PC-9 (cell line): ENCODE measurements at regions of chr22 and their contacts with region 1.

Region 1: DNA sequence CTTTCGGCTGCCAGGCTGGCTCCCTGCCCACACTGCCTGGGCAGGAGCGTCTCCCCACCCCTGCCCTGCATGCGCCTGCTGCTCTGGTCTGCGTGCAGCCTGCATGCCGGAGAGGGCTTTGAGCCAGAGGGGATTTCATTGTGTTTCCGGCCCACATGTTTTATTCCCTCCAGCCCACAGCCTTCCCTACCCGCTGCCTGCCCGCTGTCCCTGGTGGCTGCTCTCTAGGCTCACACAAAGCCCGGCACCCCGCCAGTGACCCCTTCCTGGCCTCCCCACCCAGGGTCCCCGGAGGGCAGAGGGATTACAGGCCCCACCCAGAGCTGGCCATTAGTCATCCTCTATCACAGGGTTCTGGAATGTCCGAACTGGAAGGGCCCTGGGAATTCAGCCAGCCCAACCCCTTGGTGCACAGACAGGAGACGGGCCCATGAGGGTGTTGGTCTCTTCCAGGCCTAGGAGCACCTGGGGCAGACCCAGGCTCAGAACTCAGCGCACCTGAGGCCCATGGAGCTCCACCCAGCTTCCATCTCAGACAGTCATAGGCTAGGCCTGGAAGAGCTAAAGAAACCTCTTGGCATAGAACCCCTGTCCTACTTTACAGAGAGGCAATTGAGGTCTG is 55.2 kb upstream of the GCAT start:
- DNase-seq: peak; percentile 100
- H3K4me3 ChIP-seq: no peak overlapping the region
- H3K27ac ChIP-seq: peak overlapping the region; percentile 95
- H3K4me1 ChIP-seq: peaks cover 74% of the 10 kb centered on the region
- H3K27me3 ChIP-seq: no peaks in the 10 kb centered on the region
- CTCF ChIP-seq: no peak; the same call in 1 of the 2 replicates

Region 2: GRCh38 chr22:37676736-37677492 is 75.7 kb before region 1 on chr22:
- CTCF ChIA-PET with region 1: no interaction called
- POLR2A ChIA-PET with region 1: interaction called, 6 read pairs
- intact Hi-C with region 1: loop called (anchors 1 kb)
- DNase-seq: peak; percentile 88 to 93
- H3K4me3 ChIP-seq: peak overlapping the region; percentile 56
- H3K27ac ChIP-seq: peak overlapping the region; percentile 69
- H3K4me1 ChIP-seq: peaks cover 56% of the 10 kb centered on the region
- H3K27me3 ChIP-seq: no peaks in the 10 kb centered on the region
- CTCF ChIP-seq: no peak

Region 3: GRCh38 chr22:37741312-37741795 is 11.2 kb before region 1 on chr22:
- CTCF ChIA-PET with region 1: interaction called, 3 read pairs
- POLR2A ChIA-PET with region 1: interaction called, 3 read pairs
- intact Hi-C with region 1: loop called (anchors 1 kb)
- DNase-seq: no peak
- H3K4me3 ChIP-seq: no peak overlapping the region
- H3K27ac ChIP-seq: peak overlapping the region; percentile 57
- H3K4me1 ChIP-seq: peaks cover 43% of the 10 kb centered on the region
- H3K27me3 ChIP-seq: no peaks in the 10 kb centered on the region
- CTCF ChIP-seq: no peak

Region 4: DNA sequence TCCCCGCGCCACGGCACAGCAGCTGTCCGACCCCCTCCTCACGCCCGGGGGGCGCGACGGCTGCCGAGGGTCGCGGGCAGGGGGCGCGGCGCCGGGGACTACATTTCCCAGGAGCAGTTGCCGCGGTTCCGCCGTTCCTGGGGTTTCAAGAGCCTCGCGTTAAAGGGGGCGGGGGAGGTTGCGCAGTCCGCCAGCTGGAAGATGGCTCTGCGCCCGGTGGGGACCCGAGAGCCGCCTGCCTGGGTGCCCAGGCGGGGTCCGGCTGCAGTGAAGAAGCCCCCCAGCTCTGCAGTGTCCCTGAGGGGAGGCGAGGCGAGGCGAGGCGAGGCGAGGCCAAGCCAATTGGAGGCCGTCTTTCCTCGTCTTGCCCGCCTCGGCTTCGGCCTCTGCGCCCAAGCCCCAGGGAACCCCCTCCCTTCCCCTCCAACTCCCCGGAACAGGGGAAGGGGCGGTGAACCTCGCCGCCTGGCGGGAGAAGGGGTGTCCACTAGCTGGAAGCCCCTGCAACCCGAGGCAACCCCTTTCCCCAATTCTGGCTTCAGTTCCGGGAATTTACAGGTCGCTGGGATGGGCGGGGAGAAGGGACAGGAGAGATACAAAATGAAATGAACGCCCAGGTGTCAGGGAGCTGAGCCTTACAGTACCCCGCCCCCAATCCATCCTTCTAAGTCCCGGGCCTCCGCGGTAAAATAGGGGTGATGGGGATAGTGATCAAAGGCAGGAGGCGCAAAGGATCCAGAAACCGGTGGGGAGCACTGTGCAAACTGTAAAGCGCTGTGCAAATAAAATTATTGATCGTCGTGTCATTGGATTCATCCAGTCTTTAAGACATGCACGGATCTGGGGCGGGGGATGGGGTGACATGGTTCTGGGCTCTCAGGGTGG is 50.0 kb after region 1 on chr22:
- CTCF ChIA-PET with region 1: no interaction called
- POLR2A ChIA-PET with region 1: interaction called, 5 read pairs
- intact Hi-C with region 1: loop called (anchors 1 kb)
- DNase-seq: peak; percentile 51 to 52
- H3K4me3 ChIP-seq: peak overlapping the region; percentile 99
- H3K27ac ChIP-seq: no peak overlapping the region
- H3K4me1 ChIP-seq: peaks cover 13% of the 10 kb centered on the region
- H3K27me3 ChIP-seq: no peaks in the 10 kb centered on the region
- CTCF ChIP-seq: 0 out of 2 replicates have a peak, but pooled peaks have one; percentile 20

Region 5: GRCh38 chr22:37905534-37906363 is 153.2 kb after region 1 on chr22 and contains the start of gene MICALL1:
- CTCF ChIA-PET with region 1: no interaction called
- POLR2A ChIA-PET with region 1: no interaction called
- intact Hi-C with region 1: loop called (anchors 2 kb)
- DNase-seq: peak; percentile 63 to 90
- H3K4me3 ChIP-seq: peak within 1 kb of the TSS; percentile 81
- H3K27ac ChIP-seq: peak within 1 kb of the TSS; percentile 99
- H3K4me1 ChIP-seq: peaks cover 41% of the 10 kb centered on the region
- H3K27me3 ChIP-seq: no peaks in the 10 kb centered on the region
- CTCF ChIP-seq: 0 out of 2 replicates have a peak, but pooled peaks have one; percentile 20
- total RNA-seq, gene MICALL1: 113 and 126 TPM in 2 replicates

Region 6: DNA sequence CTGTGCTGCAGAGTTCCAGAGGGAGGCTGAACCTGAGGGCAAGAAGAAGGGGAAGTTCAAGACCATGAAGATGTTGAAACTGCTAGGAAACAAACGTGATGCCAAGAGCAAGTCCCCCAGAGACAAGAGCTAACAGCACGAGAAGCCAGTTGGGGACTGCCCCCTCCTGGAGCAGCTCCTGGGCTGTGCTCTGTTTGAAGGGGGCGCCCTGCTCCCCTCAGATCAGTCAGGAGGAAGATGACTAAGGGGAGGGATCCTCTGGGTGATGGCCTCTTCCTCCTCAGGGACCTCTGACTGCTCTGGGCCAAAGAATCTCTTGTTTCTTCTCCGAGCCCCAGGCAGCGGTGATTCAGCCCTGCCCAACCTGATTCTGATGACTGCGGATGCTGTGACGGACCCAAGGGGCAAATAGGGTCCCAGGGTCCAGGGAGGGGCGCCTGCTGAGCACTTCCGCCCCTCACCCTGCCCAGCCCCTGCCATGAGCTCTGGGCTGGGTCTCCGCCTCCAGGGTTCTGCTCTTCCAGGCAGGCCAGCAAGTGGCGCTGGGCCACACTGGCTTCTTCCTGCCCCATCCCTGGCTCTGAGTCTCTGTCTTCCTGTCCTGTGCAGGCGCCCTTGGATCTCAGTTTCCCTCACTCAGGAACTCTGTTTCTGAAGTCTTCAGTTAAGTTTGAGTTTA is 188.3 kb after region 1 on chr22:
- CTCF ChIA-PET with region 1: no interaction called
- POLR2A ChIA-PET with region 1: no interaction called
- intact Hi-C with region 1: no loop called
- DNase-seq: no peak
- H3K4me3 ChIP-seq: no peak overlapping the region
- H3K27ac ChIP-seq: no peak overlapping the region
- H3K4me1 ChIP-seq: no peaks in the 10 kb centered on the region
- H3K27me3 ChIP-seq: no peaks in the 10 kb centered on the region
- CTCF ChIP-seq: no peak